ENCODE measurements at regions of chr3 and their contacts with region 1.

Region 1: GRCh38 chr3:100590114-100590839 is 19.1 kb upstream of the ADGRG7 start:
- DNase-seq: peak; percentile 83
- H3K4me3 Mint-ChIP-seq: no peak overlapping the region
- H3K27ac Mint-ChIP-seq: no peak overlapping the region
- H3K4me1 Mint-ChIP-seq: peaks cover 8% of the 10 kb centered on the region
- H3K27me3 Mint-ChIP-seq: no peaks in the 10 kb centered on the region
- CTCF ChIP-seq: peak; percentile 75

Region 2: DNA sequence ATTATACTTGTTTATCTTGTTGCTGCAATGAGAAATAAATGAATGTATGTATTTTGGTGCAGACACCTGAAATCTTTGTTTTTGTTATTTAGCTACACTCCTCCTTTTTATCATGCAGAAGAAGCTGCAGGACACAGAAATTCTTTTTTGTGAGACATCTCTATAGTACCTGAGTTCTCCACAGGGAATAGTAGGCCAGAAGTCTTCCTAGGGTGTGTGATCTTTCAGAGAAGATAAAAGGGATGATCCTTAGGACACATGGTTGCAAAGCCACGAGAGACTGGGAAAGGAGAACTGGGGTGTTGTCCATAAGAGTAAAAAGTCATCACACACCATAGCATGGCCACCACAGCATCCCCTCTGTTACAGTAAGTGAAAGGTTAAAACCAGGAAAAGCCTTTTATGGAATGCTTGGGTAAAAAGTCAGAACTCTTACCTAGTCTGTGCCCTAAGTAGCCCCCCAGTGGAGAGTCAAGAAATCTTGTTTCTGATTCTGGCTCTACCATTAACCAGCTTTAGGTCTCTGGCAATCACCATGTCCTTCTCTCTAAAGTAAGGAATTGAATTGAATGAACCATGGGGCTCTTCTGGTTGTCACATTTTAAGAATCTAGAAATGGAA is 12.8 kb before region 1 on chr3:
- CTCF ChIA-PET with region 1: interaction called, 22 read pairs
- POLR2A ChIA-PET with region 1: interaction called, 3 read pairs
- intact Hi-C with region 1: no loop called
- DNase-seq: no peak
- H3K4me3 Mint-ChIP-seq: no peak overlapping the region
- H3K27ac Mint-ChIP-seq: no peak overlapping the region
- H3K4me1 Mint-ChIP-seq: no peaks in the 10 kb centered on the region
- H3K27me3 Mint-ChIP-seq: no peaks in the 10 kb centered on the region
- CTCF ChIP-seq: no peak

Region 3: DNA sequence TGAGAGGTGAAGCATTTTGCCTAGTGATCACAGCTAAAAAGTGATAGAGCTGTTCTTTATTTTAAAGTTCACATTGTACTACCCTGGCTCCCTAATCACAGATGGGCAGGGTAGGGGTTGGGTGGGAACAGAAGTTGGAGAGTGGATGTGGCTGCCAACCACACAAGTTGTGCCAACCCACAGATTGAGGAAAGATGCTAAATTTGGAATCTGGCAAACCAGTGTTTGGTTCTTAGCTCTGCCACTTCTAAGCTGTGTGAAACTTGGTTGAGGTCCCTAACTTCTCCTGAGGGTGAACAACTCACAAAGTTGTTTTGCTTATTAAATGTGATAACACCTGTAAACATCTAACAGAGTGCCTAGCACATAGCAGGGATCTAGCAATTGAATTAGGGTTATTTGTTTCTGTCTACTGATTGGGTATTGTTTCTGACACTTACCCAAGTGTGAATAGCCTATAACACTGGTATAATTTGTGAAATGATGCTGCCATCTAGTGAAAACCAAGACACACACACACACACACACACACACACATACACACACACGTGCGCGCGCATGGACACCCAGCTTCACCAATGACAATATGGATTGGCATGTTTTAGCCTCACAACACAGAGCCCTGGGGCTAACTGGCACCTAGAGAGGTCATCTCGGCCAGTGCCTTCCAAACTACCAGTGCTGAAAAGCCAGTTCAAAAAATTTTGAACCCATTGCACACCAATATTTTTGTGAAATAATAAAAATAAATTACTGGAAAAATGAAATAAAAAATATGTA is 44.4 kb after region 1 on chr3:
- CTCF ChIA-PET with region 1: interaction called, 11 read pairs
- POLR2A ChIA-PET with region 1: no interaction called
- intact Hi-C with region 1: no loop called
- DNase-seq: peak; percentile 72
- H3K4me3 Mint-ChIP-seq: no peak overlapping the region
- H3K27ac Mint-ChIP-seq: no peak overlapping the region
- H3K4me1 Mint-ChIP-seq: no peaks in the 10 kb centered on the region
- H3K27me3 Mint-ChIP-seq: no peaks in the 10 kb centered on the region
- CTCF ChIP-seq: no peak

Region 4: GRCh38 chr3:100968932-100969906 is 378.9 kb after region 1 on chr3:
- CTCF ChIA-PET with region 1: no interaction called
- POLR2A ChIA-PET with region 1: no interaction called
- intact Hi-C with region 1: no loop called
- DNase-seq: peak; percentile 52
- H3K4me3 Mint-ChIP-seq: no peak overlapping the region
- H3K27ac Mint-ChIP-seq: no peak overlapping the region
- H3K4me1 Mint-ChIP-seq: peaks cover 6% of the 10 kb centered on the region
- H3K27me3 Mint-ChIP-seq: no peaks in the 10 kb centered on the region
- CTCF ChIP-seq: no peak

Region 5: DNA sequence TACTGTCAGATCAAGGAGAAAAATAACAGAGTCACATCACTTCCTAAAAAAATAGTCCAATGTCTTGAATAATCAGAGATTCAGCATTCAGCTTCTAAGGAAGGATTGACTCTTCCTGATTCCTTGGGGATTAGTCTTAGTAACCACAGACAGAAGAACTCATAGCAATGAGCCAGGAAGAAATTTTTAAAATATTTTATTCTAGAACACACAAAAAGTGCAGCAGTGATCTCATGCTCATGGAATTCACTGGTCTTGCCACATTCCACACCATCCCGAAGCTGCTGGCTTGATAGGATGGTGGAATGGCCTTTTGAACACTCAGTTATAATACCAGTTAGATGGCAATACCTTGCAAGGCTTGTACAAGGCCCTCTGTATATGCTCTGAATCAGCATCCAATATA is 445.9 kb after region 1 on chr3:
- CTCF ChIA-PET with region 1: no interaction called
- POLR2A ChIA-PET with region 1: no interaction called
- intact Hi-C with region 1: no loop called
- DNase-seq: peak; percentile 88
- H3K4me3 Mint-ChIP-seq: no peak overlapping the region
- H3K27ac Mint-ChIP-seq: peak overlapping the region; percentile 93
- H3K4me1 Mint-ChIP-seq: peaks cover 40% of the 10 kb centered on the region
- H3K27me3 Mint-ChIP-seq: no peaks in the 10 kb centered on the region
- CTCF ChIP-seq: no peak